GM10248 (cell line): ENCODE measurements at regions of chr2 and their contacts with region 1.

Region 1: GRCh38 chr2:42663106-42663780 is 94.8 kb downstream of the MTA3 start:
- DNase-seq: peak; percentile 78
- CTCF ChIP-seq: peak; percentile 98

Region 2: GRCh38 chr2:42494355-42495233 is 168.6 kb before region 1 on chr2:
- CTCF ChIA-PET with region 1: interaction called, 48 read pairs
- POLR2A ChIA-PET with region 1: no interaction called
- DNase-seq: peak; percentile 82
- CTCF ChIP-seq: peak; percentile 77

Region 3: DNA sequence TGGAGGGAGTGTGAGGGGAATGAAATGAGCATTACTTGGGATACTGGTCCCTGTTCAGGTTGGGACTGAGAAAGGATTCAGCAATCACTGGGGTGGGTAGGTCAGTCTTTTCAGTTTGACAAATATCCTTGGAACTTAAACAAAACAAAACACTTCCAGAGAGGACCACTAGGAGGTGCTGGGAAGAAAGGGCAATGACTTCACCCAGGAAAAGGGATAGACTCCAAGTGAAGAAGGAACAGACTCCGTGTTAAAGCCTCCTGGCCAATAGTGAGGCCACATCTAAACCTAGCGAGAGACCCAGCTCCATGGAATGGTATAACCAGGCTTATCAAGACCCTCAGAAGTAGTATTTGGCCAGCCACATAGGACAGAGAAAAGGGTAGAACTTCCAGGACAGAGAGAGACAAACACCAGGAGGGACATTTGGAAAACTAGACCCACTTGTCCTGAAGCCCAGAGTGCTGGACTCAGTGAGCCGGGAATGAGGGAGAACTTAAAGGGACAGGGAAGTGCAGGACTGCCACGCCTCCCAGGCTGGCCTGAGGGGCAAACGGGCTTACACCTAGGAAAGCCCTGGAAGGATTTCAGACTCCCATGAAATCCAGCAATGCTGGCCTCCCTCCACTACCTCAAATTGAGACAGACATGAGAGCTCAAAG is 149.9 kb before region 1 on chr2:
- CTCF ChIA-PET with region 1: interaction called, 10 read pairs
- POLR2A ChIA-PET with region 1: no interaction called
- DNase-seq: peak; percentile 35
- CTCF ChIP-seq: peak; percentile 60

Region 4: DNA sequence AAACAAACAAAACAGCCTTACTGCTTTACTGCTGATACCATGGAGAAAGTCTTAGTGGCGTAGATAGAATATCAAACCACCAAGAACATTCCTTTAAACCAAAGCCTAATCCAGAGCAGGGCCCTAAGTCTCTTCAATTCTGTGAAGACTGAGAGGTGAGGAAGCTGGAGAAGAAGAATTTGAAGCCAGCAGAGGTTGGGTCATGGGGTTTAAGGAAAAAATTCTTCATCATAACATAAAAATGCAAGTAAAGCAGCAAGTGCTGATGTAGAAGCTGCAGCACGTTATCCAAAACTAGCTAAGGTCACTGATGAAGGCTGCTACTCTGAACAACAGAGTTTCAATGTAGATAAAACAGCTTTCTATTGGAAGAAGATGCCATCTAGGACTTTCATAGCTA is 17.7 kb before region 1 on chr2:
- CTCF ChIA-PET with region 1: interaction called, 30 read pairs
- POLR2A ChIA-PET with region 1: no interaction called
- DNase-seq: no peak
- CTCF ChIP-seq: no peak

Region 5: DNA sequence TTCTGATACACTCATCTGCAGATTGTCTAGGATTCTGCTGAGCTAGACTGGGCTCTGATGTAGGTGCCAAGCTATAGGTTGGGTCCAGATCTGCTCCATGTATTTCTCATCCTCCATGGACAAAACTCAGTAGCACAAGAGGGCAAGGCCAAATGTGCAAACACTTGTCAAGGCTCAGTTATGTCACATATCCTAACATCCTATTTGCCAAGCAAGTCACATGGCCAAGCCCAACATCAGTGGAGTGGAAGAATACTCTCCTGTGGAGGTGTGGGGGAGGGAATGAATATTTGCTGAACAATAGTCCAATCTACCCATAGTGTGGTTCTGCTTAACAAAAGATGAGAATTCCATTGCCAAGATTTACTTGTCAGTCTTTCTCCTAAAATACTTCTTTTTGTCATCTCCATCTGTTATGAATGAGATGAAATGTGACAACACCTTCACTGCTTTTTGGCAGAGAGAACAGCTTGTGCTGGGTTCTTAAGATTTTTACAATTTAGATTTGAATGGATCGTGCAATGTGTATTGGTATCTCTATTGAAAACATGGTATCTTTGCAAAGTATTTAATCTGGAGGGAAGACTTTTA is 10.8 kb after region 1 on chr2:
- CTCF ChIA-PET with region 1: interaction called, 55 read pairs
- POLR2A ChIA-PET with region 1: no interaction called
- DNase-seq: no peak
- CTCF ChIP-seq: no peak

Region 6: DNA sequence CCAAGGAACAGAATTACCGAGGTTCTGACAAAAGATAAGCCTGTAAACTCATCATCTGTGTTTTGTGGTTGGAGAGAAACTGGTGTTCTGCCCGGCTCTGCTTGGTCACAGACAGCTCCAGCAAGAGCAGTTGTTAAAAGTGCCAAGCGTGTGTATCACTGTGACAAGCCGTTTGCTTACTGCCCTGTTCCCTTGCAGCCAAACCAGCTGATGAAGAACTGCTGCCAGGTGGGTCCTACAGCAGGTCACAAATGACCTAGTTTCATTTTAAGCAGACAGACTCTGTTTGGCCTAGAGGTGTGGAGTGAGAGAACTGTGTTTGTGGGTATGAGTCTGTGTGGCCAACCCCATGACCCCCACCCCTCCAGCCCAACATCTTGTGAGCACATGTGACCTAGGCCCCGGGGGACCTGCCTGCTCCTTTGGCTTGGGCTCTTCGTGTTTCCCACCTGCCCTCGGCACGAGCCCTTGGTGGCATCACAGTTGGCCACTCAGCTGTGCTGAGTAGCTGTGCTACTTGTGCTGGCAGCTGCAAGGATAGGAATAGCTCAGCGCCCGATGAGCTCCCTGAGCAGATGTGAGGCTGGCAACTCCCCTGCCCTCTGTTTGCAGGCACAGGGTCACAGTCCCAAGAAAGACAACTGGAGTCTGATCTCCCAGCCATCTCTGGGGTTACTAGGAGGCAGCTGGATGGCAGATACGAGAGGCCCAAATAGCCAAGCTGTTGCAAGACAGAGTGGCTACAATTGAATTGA is 91.0 kb after region 1 on chr2:
- CTCF ChIA-PET with region 1: interaction called, 17 read pairs
- POLR2A ChIA-PET with region 1: no interaction called
- DNase-seq: peak; percentile 55
- CTCF ChIP-seq: no peak